ENCODE measurements at regions of chr1 and their contacts with region 1.

Region 1: DNA sequence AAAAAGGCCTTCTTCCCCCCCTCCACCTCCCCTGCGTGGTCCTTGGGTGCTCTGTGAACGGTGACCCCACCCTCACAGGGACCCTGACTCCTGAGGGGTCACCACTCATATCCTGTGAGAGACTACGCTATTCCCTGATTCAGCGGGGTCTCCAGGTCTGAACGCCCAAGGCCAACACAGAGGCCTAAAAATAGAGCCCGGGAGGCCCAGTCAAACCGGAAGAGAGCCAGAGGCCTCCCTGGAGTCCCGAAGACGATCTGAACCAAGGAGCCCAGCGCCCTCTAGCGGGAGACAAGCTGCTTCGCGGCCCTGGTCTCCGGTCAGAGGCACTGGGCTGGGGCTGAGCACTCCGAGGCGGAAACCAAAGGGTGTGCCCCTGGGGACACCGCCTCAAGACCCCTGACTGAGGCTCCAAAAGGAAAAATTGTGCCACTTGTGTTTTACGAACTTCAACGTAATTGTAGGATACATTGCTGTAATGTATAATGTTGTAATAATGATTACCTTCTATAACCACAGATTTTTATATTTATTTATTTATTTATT is 42.4 kb upstream of the PSEN2 start:
- DNase-seq: peak; percentile 94 to 95
- ATAC-seq: peak; percentile 99 to 100
- H3K4me3 ChIP-seq: no peak overlapping the region
- H3K27ac ChIP-seq: peak overlapping the region; percentile 58 to 80; a peak in 5 of 6 replicates
- H3K4me1 ChIP-seq: 0 out of 3 replicates have a peak, but pooled peaks cover 3% of the 10 kb centered on the region
- CTCF ChIP-seq: peak; percentile 87
- EP300 ChIP-seq: no peak
- POLR2A ChIP-seq: no peak
- RAD21 ChIP-seq: peak; percentile 91 to 97

Region 2: DNA sequence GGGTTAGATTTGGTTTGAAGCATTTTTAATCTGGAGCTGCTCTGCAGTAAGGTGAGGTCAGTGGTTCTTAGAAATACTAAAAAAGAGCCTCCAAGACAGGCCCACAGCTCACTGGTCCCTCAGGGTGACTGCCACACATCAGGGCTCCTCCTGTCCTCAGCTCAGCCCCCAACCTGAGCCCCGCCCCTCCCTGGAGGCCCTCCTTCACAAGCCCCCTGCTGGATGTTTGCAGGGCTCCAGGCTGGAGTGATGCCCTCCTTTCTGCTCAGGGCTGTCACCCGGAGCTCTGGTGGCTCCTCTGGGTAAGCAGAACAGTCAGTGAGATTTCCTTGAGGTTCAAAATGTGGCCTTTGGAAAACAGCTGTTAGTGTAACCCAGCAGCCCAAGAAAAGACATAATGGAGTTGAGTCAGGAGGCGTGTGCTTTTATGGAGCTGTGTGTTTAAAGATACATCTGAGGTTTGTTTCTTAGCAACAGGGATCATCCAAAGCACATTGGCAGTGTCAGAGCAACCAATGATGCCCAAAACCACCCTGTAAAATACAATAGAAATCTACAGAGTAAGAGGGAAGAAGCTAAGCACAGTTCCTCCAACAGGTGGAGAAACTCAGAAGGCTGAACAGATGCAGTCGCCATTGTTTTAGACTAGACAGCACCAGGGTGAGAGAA is 258.0 kb before region 1 on chr1:
- CTCF ChIA-PET with region 1: no interaction called
- POLR2A ChIA-PET with region 1: no interaction called
- DNase-seq: peak; percentile 31 to 70
- ATAC-seq: peak; percentile 85 to 98
- H3K4me3 ChIP-seq: no peak overlapping the region
- H3K27ac ChIP-seq: no peak overlapping the region
- H3K4me1 ChIP-seq: no peaks in the 10 kb centered on the region
- CTCF ChIP-seq: no peak
- EP300 ChIP-seq: no peak
- POLR2A ChIP-seq: no peak
- RAD21 ChIP-seq: no peak

Region 3: GRCh38 chr1:226626577-226626956 is 201.5 kb before region 1 on chr1:
- CTCF ChIA-PET with region 1: interaction called, 24 read pairs
- POLR2A ChIA-PET with region 1: no interaction called
- DNase-seq: peak; percentile 63 to 67
- ATAC-seq: peak; percentile 85 to 93
- H3K4me3 ChIP-seq: no peak overlapping the region
- H3K27ac ChIP-seq: no peak overlapping the region
- H3K4me1 ChIP-seq: no peaks in the 10 kb centered on the region
- CTCF ChIP-seq: peak; percentile 83
- EP300 ChIP-seq: no peak
- POLR2A ChIP-seq: no peak
- RAD21 ChIP-seq: peak; percentile 62 to 67

Region 4: DNA sequence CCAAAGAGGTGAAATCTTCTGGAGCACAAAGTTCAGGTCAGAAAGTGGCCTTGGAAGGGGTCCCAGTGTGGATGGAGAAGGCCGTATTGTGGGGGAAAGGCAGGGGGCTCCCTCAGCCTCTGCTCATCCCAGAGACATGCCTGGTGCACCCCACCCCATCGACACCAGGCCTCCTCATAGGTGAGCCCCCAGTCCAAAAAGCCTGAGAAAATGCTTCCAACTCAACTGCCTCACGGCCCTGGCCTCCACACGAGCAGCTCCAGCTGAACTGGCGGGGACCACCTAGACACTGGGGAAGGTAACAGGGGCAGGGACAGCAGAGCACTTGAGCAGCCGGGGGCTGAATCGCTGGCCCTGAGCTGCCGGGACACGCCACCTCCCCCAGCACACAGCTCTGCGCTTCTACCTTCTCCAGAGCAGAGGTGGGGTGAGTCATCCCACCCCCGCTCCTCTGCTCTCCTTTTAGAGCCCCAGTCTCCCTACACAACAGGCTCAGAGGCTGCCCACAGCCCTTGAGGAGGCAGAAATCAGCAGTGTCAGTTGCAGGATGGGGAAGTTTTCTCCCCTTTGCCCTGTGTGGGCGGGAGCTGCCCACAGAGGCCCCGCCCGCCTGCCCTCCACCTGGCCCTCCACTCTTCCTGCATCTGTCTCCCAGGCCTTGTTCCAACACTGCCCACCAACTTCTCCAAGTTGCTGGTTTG is 185.0 kb before region 1 on chr1:
- CTCF ChIA-PET with region 1: interaction called, 127 read pairs
- POLR2A ChIA-PET with region 1: no interaction called
- DNase-seq: no peak
- ATAC-seq: peak in 1 of 2 experiments; percentile 52; a peak in 3 of 6 replicates
- H3K4me3 ChIP-seq: no peak overlapping the region
- H3K27ac ChIP-seq: no peak overlapping the region
- H3K4me1 ChIP-seq: no peaks in the 10 kb centered on the region
- CTCF ChIP-seq: no peak
- EP300 ChIP-seq: no peak
- POLR2A ChIP-seq: no peak
- RAD21 ChIP-seq: no peak

Region 5: GRCh38 chr1:226766565-226766964 is 61.5 kb before region 1 on chr1:
- CTCF ChIA-PET with region 1: no interaction called
- POLR2A ChIA-PET with region 1: no interaction called
- DNase-seq: no peak
- ATAC-seq: no peak
- H3K4me3 ChIP-seq: no peak overlapping the region
- H3K27ac ChIP-seq: no peak overlapping the region
- H3K4me1 ChIP-seq: peaks cover 23% of the 10 kb centered on the region
- CTCF ChIP-seq: no peak
- EP300 ChIP-seq: no peak
- POLR2A ChIP-seq: no peak
- RAD21 ChIP-seq: no peak

Region 6: DNA sequence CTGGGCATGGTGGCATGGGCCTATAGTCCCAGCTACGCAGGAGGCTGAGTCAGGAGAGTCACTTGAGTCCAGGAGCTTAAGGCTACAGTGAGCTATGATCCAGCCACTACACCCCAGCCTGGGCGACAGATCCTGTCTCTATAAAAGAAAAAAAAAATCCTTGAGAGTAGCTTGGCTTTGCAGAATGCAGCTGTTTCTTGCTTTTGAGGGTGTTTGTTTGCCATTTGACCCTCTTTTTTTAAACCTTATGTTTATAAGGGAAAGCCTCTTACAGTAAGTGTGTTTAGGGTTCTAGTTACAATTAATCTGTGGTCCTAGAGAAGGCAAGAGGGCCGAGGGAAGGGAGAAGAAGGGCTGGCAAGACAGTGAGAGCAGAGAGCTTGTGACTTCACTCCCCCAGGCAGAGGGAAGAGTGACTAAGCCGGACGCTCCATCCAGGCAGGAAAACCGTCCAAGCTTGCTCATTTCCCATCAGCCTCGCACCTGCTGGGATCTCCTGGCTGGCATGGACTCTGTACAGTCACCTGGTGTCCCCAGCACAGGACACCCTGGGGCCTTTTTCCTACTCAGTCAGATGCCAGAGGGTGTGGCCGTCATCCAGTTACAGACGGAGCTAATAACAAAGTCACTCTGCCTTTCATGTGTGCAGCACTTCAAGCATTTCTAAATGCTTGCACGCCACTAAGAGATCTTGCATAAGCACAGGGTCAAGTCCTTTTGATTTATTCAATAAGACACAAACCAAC is 13.1 kb before region 1 on chr1:
- CTCF ChIA-PET with region 1: interaction called, 20 read pairs
- POLR2A ChIA-PET with region 1: no interaction called
- DNase-seq: peak; percentile 56 to 57
- ATAC-seq: peak; percentile 85 to 93
- H3K4me3 ChIP-seq: no peak overlapping the region
- H3K27ac ChIP-seq: peak overlapping the region; percentile 49 to 68
- H3K4me1 ChIP-seq: peaks cover 27% of the 10 kb centered on the region; the same call in 2 of the 3 replicates
- CTCF ChIP-seq: no peak
- EP300 ChIP-seq: peak in 1 of 2 experiments; percentile 52; a peak in 1 of 5 replicates
- POLR2A ChIP-seq: no peak
- RAD21 ChIP-seq: no peak

Region 7: DNA sequence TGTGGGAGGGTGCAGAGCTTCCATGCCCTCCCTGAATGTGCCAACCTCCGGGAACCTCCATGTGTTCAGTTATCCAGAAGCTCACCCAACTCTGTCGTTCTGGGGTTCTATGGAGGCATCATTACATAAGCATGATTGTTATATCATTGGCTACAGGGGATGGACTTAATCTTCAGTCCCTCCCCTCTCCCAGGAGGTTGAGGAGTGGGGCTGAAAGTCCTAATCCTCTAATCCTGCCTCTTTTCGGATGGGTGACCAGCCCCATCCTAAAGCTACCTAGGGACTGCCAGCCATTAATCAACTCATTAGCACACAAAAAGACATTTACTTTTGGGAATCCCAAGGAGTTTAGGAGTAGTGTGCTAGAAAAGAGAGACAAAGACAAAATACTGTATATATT is 10.4 kb after region 1 on chr1:
- CTCF ChIA-PET with region 1: interaction called, 13 read pairs
- POLR2A ChIA-PET with region 1: no interaction called
- DNase-seq: no peak
- ATAC-seq: no peak
- H3K4me3 ChIP-seq: no peak overlapping the region
- H3K27ac ChIP-seq: no peak overlapping the region
- H3K4me1 ChIP-seq: no peaks in the 10 kb centered on the region
- CTCF ChIP-seq: no peak
- EP300 ChIP-seq: no peak
- POLR2A ChIP-seq: no peak
- RAD21 ChIP-seq: no peak

Region 8: GRCh38 chr1:226895644-226896043 is 67.6 kb after region 1 on chr1:
- CTCF ChIA-PET with region 1: no interaction called
- POLR2A ChIA-PET with region 1: no interaction called
- DNase-seq: no peak
- ATAC-seq: no peak
- H3K4me3 ChIP-seq: no peak overlapping the region
- H3K27ac ChIP-seq: no peak overlapping the region
- H3K4me1 ChIP-seq: no peaks in the 10 kb centered on the region
- CTCF ChIP-seq: no peak
- EP300 ChIP-seq: no peak
- POLR2A ChIP-seq: no peak
- RAD21 ChIP-seq: no peak

Measured in A549 (cell line).